ENCODE measurements at regions of chr3 and their contacts with region 1.

Region 1: DNA sequence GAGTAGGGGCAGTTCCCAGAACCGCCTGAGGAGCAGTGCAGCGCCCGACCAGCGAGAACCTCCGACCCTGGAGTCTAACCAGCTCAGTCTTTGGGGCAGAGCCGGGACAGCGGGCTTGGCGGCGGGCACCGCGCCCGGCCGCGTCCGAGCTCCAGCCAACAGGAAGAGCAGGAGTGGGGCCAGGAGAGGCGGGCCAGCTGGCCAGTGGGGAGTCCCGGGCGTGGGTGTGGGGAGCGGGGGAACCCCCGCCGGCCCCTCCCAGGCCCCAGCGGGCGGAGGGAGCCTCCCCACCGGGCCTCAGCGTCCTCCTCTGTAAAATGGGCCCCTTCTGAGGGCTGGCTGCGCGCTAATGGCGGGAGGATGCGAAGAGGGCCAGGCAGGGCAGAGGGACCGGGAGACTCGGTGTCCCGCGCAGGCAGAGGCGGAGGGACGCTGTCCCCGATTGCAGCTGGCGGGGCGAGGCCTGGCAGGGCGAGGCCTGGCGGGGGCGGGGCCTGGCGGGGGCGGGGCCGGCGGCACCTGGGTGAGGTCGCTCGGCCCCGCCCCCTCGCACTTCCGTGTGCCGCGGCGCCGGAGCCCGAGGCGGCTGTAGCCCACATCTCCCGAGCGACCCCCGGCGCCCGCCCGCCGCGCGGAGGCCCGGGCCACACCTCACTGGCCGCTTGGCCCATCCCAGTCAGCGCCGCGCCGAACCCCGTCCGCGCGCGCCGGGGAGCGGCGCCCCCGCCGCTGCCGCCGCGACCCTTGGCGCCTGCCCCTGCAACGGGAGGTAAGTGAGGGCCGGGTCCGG is at the start of gene PRKCD:
- DNase-seq: peak; percentile 69 to 78 (median 73)
- H3K4me3 ChIP-seq: peak within 1 kb of the TSS; percentile 65 to 97 (median 93)
- H3K4me3 Mint-ChIP-seq: peak within 1 kb of the TSS; percentile 87 to 100
- H3K27ac ChIP-seq: peak within 1 kb of the TSS; percentile 86 to 93
- H3K27ac Mint-ChIP-seq: peak within 1 kb of the TSS; percentile 93 to 99 (median 97)
- H3K4me1 ChIP-seq: peaks cover 77 to 81% of the 10 kb centered on the region in 2 donors
- H3K4me1 Mint-ChIP-seq: peaks cover 78% of the 10 kb centered on the region
- H3K27me3 ChIP-seq: peaks cover 0 to 11% of the 10 kb centered on the region in 2 donors
- H3K27me3 Mint-ChIP-seq: peaks cover 9 to 15% (median 10%) of the 10 kb centered on the region in 3 donors
- CTCF ChIP-seq: peak; percentile 43
- polyA plus RNA-seq, gene PRKCD: 123 to 329 (median 158) TPM

Region 2: GRCh38 chr3:53114011-53114400 is 46.8 kb before region 1 on chr3:
- intact Hi-C with region 1: loop called in 1 of 2 experiments (anchors 10 kb)
- DNase-seq: peak; percentile 77 to 85 (median 81)
- H3K4me3 ChIP-seq: peak overlapping the region in 1 of 3 experiments; percentile 13
- H3K4me3 Mint-ChIP-seq: no peak overlapping the region
- H3K27ac ChIP-seq: peak overlapping the region in 1 of 2 donors; percentile 70
- H3K27ac Mint-ChIP-seq: no peak overlapping the region
- H3K4me1 ChIP-seq: peaks cover 37 to 38% of the 10 kb centered on the region in 2 donors
- H3K4me1 Mint-ChIP-seq: peaks cover 15% of the 10 kb centered on the region
- H3K27me3 ChIP-seq: no peaks in the 10 kb centered on the region
- H3K27me3 Mint-ChIP-seq: no peaks in the 10 kb centered on the region
- CTCF ChIP-seq: peak; percentile 95

Region 3: DNA sequence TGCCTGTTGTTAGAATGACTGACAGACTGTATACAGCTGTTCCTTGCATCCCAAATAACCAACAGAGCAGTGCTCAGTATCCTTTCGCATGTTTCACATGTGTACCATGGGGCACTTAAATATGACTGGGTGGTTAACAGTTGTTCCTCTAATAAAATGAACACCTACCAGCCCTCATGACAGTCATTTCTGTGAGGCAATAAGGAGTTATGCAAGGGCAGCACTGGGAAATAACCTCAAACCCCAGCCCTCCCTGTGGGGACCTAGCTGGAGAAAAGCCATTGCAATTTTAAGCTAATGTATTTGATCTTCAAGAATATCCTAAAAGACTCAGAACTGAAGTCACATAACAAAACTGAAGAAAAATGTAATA is 37.9 kb before region 1 on chr3:
- intact Hi-C with region 1: loop called (anchors 5 to 10 kb)
- DNase-seq: peak; percentile 84 to 94 (median 89)
- H3K4me3 ChIP-seq: no peak overlapping the region
- H3K4me3 Mint-ChIP-seq: peak overlapping the region in 1 of 2 donors; percentile 39
- H3K27ac ChIP-seq: peak overlapping the region; percentile 65 to 84
- H3K27ac Mint-ChIP-seq: peak overlapping the region; percentile 82 to 95 (median 90)
- H3K4me1 ChIP-seq: peaks cover 27 to 34% of the 10 kb centered on the region in 2 donors
- H3K4me1 Mint-ChIP-seq: peaks cover 31% of the 10 kb centered on the region
- H3K27me3 ChIP-seq: no peaks in the 10 kb centered on the region
- H3K27me3 Mint-ChIP-seq: no peaks in the 10 kb centered on the region
- CTCF ChIP-seq: no peak

Region 4: DNA sequence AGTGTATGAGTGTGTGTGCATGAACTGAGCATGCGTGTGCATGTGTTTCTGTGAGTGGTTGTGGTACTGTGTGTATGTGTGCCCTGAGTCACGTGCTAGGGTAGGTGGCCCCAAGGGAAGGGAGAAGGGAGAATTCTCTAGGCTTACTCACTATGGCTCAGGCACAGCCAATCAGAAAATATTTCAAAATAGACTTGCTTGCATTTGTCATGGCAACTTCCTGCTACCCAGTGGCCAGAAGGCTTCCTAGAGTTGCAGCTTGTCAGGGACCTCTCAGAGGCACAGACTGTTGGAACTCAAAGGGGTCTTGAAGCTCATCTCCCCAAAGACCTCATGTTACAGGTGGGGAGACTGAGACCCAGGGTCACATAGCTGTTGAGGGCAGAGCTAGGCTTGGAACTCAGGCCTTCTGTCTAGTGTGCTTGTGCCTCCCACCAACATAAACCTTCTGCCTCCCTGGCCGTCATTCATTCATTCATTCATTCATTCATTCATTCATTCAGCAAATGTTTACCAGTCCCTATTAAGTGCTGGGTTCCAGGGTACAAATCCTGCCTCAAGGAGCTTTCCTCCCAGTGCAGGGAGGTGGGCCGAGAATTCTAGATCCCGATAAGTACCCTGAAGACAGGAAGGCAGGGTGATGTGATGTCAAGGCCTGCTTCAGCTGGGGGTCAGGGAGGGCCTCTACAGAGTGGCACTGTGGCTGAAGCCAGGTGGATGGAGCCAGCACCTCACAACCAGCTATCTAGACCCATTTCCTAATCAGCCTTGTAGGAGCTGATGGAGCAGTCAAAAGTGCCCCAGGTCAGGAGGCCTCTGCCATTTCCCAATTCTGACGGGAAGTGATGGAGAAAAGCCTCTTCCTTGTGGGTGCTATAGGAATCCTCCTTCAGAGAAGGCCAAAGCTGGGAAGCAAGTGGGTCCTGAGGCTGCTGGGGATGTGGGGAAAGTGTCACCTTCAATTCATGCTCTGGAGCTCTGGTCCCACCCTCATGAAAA is 19.7 kb before region 1 on chr3:
- intact Hi-C with region 1: loop called in 1 of 2 experiments (anchors 2 kb)
- DNase-seq: peak; percentile 86 to 98 (median 95)
- H3K4me3 ChIP-seq: peak overlapping the region in 1 of 3 experiments; percentile 56
- H3K4me3 Mint-ChIP-seq: peak overlapping the region in 1 of 2 donors; percentile 59
- H3K27ac ChIP-seq: peak overlapping the region; percentile 78 to 91
- H3K27ac Mint-ChIP-seq: peak overlapping the region; percentile 87 to 99 (median 95)
- H3K4me1 ChIP-seq: peaks cover 57 to 60% of the 10 kb centered on the region in 2 donors
- H3K4me1 Mint-ChIP-seq: peaks cover 65% of the 10 kb centered on the region
- H3K27me3 ChIP-seq: no peaks in the 10 kb centered on the region
- H3K27me3 Mint-ChIP-seq: no peaks in the 10 kb centered on the region
- CTCF ChIP-seq: no peak

Region 5: DNA sequence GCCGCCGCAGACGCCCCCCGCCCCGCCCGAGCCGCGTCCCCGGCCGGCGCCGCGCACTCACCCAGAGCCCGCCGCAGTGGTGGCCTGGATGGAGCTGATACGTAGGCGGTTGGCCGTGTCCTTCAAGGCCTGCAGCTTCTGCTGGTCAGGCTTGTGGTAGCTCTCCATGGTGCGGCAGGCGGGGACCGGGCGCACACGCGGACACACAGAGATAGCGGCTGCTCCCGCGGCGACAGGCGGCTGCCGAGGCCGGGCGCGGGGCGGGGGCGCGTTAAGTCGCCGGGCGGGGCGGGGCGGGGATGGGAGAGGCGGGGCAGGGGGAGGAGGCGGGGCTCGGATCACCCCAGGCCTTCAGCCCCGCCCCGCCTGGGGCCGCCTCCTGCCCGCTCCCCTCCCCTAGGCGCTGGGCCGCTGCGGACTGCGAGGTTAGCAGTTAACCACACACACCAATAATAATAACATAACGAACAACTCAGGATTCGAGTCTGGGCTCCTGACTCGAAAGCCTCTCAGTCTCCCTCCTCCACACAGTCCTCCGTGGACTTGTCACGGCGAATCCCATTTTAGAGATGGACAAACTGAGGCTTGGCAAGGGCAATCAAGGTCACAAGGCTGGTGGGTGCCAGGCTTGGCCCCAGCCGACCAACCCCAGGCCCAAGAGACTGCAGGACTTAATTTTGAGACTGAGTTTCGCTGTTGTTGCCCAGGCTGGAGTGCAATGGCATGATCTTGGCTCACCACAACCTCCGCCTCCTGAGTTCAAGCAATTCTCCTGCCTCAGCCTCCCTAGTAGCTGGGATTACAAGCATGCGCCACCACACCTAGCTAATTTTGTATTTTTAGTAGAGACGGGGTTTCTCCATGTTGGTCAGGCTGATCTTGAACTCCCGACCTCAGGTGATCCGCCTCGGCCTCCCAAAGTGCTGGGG is 95.2 kb after region 1 on chr3 and contains the start of gene TKT:
- intact Hi-C with region 1: loop called in 1 of 2 experiments (anchors 5 kb)
- DNase-seq: peak; percentile 77 to 81 (median 81)
- H3K4me3 ChIP-seq: peak within 1 kb of the TSS; percentile 83 to 99 (median 91)
- H3K4me3 Mint-ChIP-seq: peak within 1 kb of the TSS; percentile 94 to 96
- H3K27ac ChIP-seq: peak within 1 kb of the TSS; percentile 94 to 97
- H3K27ac Mint-ChIP-seq: peak within 1 kb of the TSS; percentile 96 to 100 (median 99)
- H3K4me1 ChIP-seq: peaks cover 41 to 43% of the 10 kb centered on the region in 2 donors
- H3K4me1 Mint-ChIP-seq: peaks cover 49% of the 10 kb centered on the region
- H3K27me3 ChIP-seq: no peaks in the 10 kb centered on the region
- H3K27me3 Mint-ChIP-seq: peaks cover 1 to 2% (median 2%) of the 10 kb centered on the region in 3 donors
- CTCF ChIP-seq: no peak
- polyA plus RNA-seq, gene TKT: 496 to 582 (median 562) TPM

Region 6: DNA sequence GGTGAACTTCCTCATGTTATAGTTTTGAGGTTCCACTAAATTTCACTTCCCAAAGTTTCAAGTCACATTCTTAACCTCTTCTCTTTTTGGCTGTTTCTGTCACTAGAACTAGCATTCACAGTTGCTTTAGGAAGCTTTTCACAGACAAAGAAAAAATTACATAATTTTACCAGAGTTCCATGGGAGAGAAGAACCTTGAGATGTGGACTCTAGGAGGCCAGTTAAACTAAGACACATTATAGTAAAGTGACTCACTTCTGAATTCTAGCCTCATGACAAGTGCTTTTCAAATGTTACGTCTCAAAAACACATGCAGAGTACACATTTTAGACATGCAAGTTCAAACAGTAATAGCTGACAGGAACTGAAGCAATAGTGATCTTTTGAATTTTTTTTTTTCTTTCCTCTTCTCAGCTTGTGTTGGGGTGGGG is 1806.9 kb after region 1 on chr3:
- intact Hi-C with region 1: no loop called
- DNase-seq: peak; percentile 55 to 77 (median 75)
- H3K4me3 ChIP-seq: peak overlapping the region; percentile 40 to 81 (median 65)
- H3K4me3 Mint-ChIP-seq: peak overlapping the region; percentile 67 to 90
- H3K27ac ChIP-seq: peak overlapping the region in 1 of 2 donors; percentile 79
- H3K27ac Mint-ChIP-seq: peak overlapping the region; percentile 66 to 92 (median 85)
- H3K4me1 ChIP-seq: peaks cover 77 to 91% of the 10 kb centered on the region in 2 donors
- H3K4me1 Mint-ChIP-seq: peaks cover 84% of the 10 kb centered on the region
- H3K27me3 ChIP-seq: no peaks in the 10 kb centered on the region
- H3K27me3 Mint-ChIP-seq: peaks cover 0 to 2% (median 0%) of the 10 kb centered on the region in 3 donors
- CTCF ChIP-seq: no peak